Caco-2 (cell line): ENCODE measurements at regions of chr15 and their contacts with region 1.

Region 1: DNA sequence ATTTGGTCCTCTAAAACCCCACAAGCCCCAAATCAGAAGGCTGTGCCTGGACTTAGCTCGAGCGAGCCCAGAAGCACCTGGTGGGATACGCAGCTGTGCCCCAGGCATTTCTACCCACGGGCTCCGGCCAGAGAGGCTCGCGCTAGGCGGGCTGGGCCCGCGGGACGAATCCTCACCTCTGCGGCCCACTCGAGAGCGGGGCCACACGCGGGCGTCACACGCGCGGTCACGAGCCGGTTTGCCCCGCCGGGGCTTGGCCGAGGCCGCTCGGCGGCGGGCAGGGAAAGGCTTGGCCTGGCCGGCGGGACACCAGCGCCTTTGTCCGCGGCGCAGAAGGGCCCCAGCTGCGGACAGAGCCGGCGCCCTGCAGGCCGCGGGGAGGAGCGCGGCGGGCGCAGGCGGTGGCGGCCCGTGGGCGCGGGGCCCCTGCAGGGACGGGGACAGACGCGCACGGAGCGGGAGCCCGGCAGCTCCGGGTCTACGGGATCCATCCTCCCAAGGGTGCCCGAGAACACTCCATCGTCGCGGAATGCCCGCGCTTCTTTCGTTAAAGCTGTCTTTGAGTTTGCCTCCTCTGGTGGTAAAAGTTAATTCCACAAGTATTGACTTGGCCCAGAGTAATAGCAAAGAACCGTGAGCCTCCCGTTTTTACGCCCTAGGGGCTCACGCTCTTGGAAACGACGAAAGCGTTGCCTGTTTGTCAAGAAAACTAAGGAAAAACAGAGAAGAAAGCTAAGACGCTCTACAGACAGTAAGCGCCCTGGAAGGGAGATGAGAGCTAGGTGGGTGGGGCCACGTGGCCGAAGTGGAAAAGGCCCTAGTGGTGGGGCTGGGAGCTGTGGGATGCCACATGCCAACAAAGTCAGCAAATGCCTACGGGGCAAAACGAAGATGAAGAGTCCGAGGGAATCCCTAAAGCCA is 26.4 kb downstream of the TYRO3 start:
- DNase-seq: peak; percentile 82 to 89
- H3K4me3 ChIP-seq: peak overlapping the region; percentile 49
- H3K4me3 Mint-ChIP-seq: peak overlapping the region; percentile 79
- H3K27ac Mint-ChIP-seq: peak overlapping the region; percentile 92
- H3K4me1 ChIP-seq: peaks cover 51% of the 10 kb centered on the region
- H3K4me1 Mint-ChIP-seq: peaks cover 30% of the 10 kb centered on the region
- H3K27me3 ChIP-seq: no peaks in the 10 kb centered on the region
- H3K27me3 Mint-ChIP-seq: no peaks in the 10 kb centered on the region
- CTCF ChIP-seq: peak; percentile 42 to 44

Region 2: DNA sequence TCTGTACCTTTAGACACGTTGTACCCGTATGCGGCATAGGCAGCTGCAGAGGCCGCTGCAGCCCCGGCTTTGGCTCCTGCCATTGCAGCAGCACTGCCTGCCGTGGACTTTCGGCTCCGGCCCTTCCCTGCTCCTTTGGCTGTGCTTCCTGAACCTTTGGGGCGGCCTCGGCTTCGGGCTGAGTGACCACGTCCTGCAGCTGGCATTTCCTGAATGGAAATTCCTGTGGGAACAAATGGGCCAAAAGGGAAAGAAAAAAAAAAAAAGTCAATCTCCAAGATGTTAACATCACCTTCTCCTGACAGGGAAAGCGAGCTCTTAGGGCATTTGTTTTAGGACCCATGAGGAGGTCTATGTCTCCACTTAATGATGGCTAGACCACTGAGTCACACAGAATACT is 602.5 kb before region 1 on chr15:
- CTCF ChIA-PET with region 1: no interaction called
- POLR2A ChIA-PET with region 1: no interaction called
- intact Hi-C with region 1: no loop called
- DNase-seq: no peak
- H3K4me3 ChIP-seq: no peak overlapping the region
- H3K4me3 Mint-ChIP-seq: no peak overlapping the region
- H3K27ac Mint-ChIP-seq: no peak overlapping the region
- H3K4me1 ChIP-seq: no peaks in the 10 kb centered on the region
- H3K4me1 Mint-ChIP-seq: no peaks in the 10 kb centered on the region
- H3K27me3 ChIP-seq: no peaks in the 10 kb centered on the region
- H3K27me3 Mint-ChIP-seq: no peaks in the 10 kb centered on the region
- CTCF ChIP-seq: no peak

Region 3: DNA sequence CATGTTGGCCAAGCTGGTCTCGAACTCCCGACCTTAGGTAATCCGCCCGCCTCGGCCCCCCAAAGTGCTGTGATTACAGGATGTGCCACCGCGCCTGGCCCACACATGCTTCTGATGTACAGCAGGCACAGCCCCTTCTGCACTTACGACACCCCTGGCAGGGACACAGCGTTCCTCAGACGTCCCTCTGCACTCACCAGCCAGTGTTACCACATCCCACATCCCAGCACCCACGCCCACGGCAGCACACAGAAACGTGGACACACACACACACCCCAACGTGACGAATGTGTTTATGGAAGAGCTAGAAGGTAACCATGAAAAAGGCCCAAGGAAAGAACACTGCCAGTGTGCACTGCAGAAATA is 40.8 kb before region 1 on chr15:
- CTCF ChIA-PET with region 1: interaction called, 6 read pairs
- POLR2A ChIA-PET with region 1: interaction called, 10 read pairs
- intact Hi-C with region 1: no loop called
- DNase-seq: no peak
- H3K4me3 ChIP-seq: peak overlapping the region; percentile 15; the same call in 1 of the 2 replicates
- H3K4me3 Mint-ChIP-seq: peak overlapping the region; percentile 86
- H3K27ac Mint-ChIP-seq: peak overlapping the region; percentile 88
- H3K4me1 ChIP-seq: peaks cover 19% of the 10 kb centered on the region
- H3K4me1 Mint-ChIP-seq: peaks cover 14% of the 10 kb centered on the region
- H3K27me3 ChIP-seq: no peaks in the 10 kb centered on the region
- H3K27me3 Mint-ChIP-seq: no peaks in the 10 kb centered on the region
- CTCF ChIP-seq: no peak

Region 4: GRCh38 chr15:41568350-41569017 is 16.9 kb before region 1 on chr15:
- CTCF ChIA-PET with region 1: interaction called, 17 read pairs
- POLR2A ChIA-PET with region 1: interaction called, 17 read pairs
- intact Hi-C with region 1: loop called (anchors 1 kb)
- DNase-seq: peak; percentile 94 to 97
- H3K4me3 ChIP-seq: no peak overlapping the region
- H3K4me3 Mint-ChIP-seq: peak overlapping the region; percentile 67
- H3K27ac Mint-ChIP-seq: peak overlapping the region; percentile 89
- H3K4me1 ChIP-seq: peaks cover 53% of the 10 kb centered on the region
- H3K4me1 Mint-ChIP-seq: peaks cover 40% of the 10 kb centered on the region
- H3K27me3 ChIP-seq: no peaks in the 10 kb centered on the region
- H3K27me3 Mint-ChIP-seq: no peaks in the 10 kb centered on the region
- CTCF ChIP-seq: peak in 1 of 2 experiments; percentile 19

Region 5: DNA sequence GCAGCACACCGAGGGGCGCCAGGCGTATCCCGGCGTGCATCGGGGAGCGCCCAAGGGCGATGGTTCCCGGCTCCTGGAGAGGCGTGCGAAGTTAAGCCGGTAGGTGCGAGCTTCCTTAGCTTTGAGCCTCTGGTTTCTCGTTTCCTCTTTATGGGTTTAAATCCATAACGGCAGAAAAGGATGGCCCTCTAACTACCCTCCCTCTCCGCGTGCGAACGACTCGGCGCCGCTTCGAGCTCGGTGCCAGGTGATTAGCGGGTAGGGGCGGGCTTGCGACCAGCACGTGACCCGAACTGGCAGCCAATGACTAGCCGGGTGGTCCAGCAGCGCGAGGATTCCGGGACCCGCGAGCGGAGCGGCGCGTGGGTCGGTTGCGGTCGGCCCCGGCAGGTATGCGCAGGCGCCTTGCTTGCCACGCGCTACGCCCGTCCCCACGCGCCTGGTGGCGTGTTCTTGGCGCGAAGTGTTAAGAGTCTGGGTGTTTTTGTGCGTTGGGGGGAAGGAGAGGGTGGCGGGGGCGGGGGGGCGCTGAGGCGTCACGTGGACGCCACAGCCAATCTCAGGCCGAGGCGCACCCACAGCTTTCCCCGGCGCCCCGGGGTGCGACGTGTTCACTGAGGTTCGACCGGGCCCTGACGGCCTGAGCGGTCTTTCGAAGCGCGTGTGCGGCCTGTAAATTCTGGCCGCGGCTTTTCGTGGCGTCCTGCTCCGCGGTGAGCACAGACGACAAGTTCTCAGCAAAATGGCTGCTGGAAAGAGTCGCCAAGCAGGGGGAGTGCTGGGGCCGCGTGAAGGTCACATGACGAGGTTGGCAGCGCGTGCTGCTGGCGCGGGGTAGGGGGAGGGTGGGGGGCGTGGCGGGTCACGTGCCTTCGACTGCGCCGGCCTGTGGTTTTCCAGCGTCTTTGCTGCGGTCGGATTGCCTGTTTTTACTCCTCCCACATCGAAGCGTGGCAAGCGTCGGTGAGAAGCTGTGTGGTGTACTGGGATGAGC is 36.1 kb after region 1 on chr15:
- CTCF ChIA-PET with region 1: interaction called, 7 read pairs
- POLR2A ChIA-PET with region 1: interaction called, 35 read pairs
- intact Hi-C with region 1: loop called (anchors 1 kb)
- DNase-seq: peak; percentile 94 to 96
- H3K4me3 ChIP-seq: peak overlapping the region; percentile 76
- H3K4me3 Mint-ChIP-seq: peak overlapping the region; percentile 97
- H3K27ac Mint-ChIP-seq: peak overlapping the region; percentile 95
- H3K4me1 ChIP-seq: peaks cover 9% of the 10 kb centered on the region; the same call in 1 of the 2 replicates
- H3K4me1 Mint-ChIP-seq: no peaks in the 10 kb centered on the region
- H3K27me3 ChIP-seq: no peaks in the 10 kb centered on the region
- H3K27me3 Mint-ChIP-seq: no peaks in the 10 kb centered on the region
- CTCF ChIP-seq: no peak

Region 6: DNA sequence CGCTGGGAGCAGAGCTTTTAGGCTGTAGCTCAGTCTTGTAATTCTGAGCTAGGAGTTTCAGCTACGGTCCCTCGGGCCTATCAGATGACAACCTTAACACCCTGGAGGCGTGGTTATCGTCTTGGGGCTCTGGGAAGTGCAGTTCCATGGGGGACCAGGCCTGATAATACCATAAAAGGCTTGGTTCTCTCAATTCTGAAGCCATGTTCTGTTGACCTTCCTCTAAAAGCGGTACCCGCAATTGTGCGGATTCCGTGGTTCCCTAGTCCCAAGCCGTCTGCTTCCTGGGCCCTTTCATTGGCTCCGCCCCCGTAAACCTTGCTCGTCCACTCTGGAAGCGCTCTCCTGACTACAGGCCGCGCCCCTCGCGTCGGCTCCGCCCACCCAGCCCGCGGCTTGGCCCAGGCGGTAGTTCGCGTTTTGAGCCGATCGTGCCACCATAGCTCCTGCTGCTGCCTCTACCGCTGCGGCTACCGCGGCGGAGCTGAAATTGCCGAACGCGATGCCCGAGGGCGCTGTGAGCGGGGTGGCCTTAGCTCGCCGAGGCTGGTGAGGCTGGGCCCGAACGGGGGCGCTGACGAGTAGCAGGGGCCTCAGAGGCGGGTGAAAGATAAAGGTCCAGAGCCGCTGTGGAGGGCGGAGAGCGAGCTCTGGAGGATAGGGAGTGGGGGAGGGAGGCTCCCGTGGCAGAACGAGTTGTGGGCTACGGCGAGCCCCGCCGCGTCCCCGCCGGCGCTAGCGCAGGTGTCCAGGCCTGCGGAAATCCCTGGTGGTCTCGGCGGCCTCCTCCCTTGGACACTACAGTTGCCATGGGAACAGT is 188.9 kb after region 1 on chr15 and contains the start of gene MAPKBP1:
- CTCF ChIA-PET with region 1: no interaction called
- POLR2A ChIA-PET with region 1: interaction called, 6 read pairs
- intact Hi-C with region 1: loop called (anchors 5 kb)
- DNase-seq: peak; percentile 97 to 98
- H3K4me3 ChIP-seq: peak within 1 kb of the TSS; percentile 65
- H3K4me3 Mint-ChIP-seq: peak within 1 kb of the TSS; percentile 94
- H3K27ac Mint-ChIP-seq: peak within 1 kb of the TSS; percentile 91
- H3K4me1 ChIP-seq: peaks cover 18% of the 10 kb centered on the region
- H3K4me1 Mint-ChIP-seq: peaks cover 27% of the 10 kb centered on the region
- H3K27me3 ChIP-seq: no peaks in the 10 kb centered on the region
- H3K27me3 Mint-ChIP-seq: no peaks in the 10 kb centered on the region
- CTCF ChIP-seq: peak; percentile 63 to 84
- total RNA-seq, gene MAPKBP1: 16.2 and 23.0 TPM in 2 replicates